ENCODE measurements at regions of chr10 and their contacts with region 1.

Region 1: GRCh38 chr10:110600487-110601101 is 33.1 kb downstream of the SMC3 start:
- DNase-seq: peak in 3 of 9 experiments; percentile 13 to 69 (median 59)
- ATAC-seq: peak; percentile 73
- H3K4me3 ChIP-seq: no peak overlapping the region
- H3K4me3 Mint-ChIP-seq: no peak overlapping the region
- H3K27ac ChIP-seq: no peak overlapping the region
- H3K27ac Mint-ChIP-seq: no peak overlapping the region
- H3K4me1 ChIP-seq: no peaks in the 10 kb centered on the region
- H3K4me1 Mint-ChIP-seq: no peaks in the 10 kb centered on the region
- H3K27me3 ChIP-seq: no peaks in the 10 kb centered on the region
- H3K27me3 Mint-ChIP-seq: no peaks in the 10 kb centered on the region
- CTCF ChIP-seq: peak; percentile 47

Region 2: GRCh38 chr10:110556969-110557601 is 43.5 kb before region 1 on chr10:
- CTCF ChIA-PET with region 1: no interaction called
- POLR2A ChIA-PET with region 1: no interaction called
- intact Hi-C with region 1: loop called (anchors 1 to 5 kb)
- DNase-seq: peak; percentile 37 to 85 (median 71)
- ATAC-seq: peak; percentile 99
- H3K4me3 ChIP-seq: no peak overlapping the region
- H3K4me3 Mint-ChIP-seq: no peak overlapping the region
- H3K27ac ChIP-seq: no peak overlapping the region
- H3K27ac Mint-ChIP-seq: no peak overlapping the region
- H3K4me1 ChIP-seq: no peaks in the 10 kb centered on the region
- H3K4me1 Mint-ChIP-seq: peaks cover 3% of the 10 kb centered on the region
- H3K27me3 ChIP-seq: no peaks in the 10 kb centered on the region
- H3K27me3 Mint-ChIP-seq: peaks cover 6% of the 10 kb centered on the region
- CTCF ChIP-seq: peak; percentile 82